ENCODE measurements at regions of chr6 and their contacts with region 1.

Region 1: DNA sequence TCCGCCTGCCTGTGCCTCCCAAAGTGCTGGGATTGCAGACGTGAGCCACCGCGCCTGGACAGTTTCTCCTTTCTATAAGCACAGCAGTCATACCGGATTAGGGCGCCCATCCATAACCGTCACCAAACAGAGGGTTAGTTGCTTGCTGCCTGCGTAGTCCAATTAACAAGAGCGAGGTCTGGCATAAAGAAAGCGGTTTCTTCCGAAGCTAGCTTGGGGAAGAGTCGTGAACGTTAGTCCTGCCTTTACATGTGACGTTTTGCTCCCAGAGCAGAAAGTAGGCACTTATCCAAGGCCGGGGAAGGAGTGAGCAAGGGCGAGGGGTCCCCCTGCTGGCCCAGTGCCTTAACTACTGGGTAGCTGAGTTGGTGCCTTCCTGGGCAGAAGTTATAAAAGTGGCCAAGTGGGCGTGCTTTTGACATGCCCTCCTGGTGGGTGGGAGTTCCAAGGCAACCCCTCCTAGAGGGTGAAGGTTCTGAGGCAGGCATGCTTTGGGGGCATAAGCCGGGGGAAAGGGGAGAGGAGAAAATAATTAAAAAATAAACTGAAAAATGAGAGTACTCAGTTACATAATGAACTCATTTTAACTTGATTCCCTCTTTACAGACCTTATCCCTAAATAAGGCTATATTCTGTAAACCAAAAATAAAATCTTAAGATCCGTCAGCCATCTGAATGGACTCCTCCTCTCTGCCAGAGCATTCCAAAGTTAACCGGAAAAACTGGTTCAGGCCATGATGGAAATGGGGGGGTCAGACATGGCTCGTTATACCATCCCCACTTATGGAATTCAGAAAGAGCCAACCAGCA is 88.0 kb downstream of the FAM217A start:
- DNase-seq: peak; percentile 67 to 77
- ATAC-seq: peak; percentile 83 to 89
- H3K4me3 ChIP-seq: peak overlapping the region; percentile 52 to 58 (median 55)
- H3K27ac ChIP-seq: peak overlapping the region; percentile 47 to 60 (median 54)
- H3K4me1 ChIP-seq: peaks cover 10 to 12% of the 10 kb centered on the region in 2 donors
- H3K27me3 ChIP-seq: no peaks in the 10 kb centered on the region
- CTCF ChIP-seq: peak; percentile 63 to 76 (median 70)
- POLR2A ChIP-seq: no peak

Region 2: DNA sequence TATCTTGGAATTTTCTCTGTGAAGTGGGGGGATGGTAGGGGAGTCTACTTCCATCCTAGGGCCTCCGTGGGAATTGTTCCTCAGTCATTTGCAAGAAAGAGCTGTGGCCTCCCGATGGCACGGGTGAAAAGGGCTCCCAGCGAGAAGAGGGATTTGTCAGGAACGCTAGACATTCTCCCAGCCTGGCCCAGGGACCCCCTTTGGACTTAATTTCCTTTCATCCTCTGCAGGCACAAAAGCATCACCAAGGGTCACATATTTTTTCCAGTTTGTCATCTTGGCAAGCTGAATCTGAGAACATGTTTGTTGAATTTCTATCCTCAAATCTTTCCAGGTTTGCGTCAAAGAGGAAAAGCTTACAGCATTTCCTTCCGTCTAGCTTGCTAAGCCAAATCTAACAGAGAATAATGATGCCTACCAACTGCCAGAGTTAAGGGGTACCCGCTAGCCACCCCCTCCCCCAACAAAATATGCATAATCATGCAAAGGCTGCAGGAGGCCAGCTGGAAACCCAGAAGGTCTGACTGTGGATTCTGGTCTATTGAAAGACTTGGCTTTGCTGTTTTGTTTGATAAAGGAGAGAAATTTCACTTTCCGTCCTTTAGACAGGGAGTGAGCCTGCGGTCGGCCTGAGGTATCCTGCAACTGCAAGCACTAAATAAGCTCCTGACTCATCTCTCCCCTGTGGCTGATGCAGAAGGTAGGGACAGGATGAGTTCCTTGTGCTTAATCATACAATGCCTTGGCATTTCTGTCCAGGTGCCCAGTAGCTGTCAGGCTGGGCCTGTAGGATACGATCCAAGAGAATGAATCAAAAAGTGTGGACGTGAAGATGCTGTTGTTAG is 709.0 kb before region 1 on chr6:
- in situ Hi-C with region 1: loop called in 1 of 4 experiments (anchors 10 kb)
- intact Hi-C with region 1: no loop called
- DNase-seq: peak; percentile 56 to 78
- ATAC-seq: peak; percentile 86 to 87
- H3K4me3 ChIP-seq: no peak overlapping the region
- H3K27ac ChIP-seq: peak overlapping the region; percentile 28 to 75 (median 67)
- H3K4me1 ChIP-seq: peaks cover 20 to 28% of the 10 kb centered on the region in 2 donors
- H3K27me3 ChIP-seq: no peaks in the 10 kb centered on the region
- CTCF ChIP-seq: no peak
- POLR2A ChIP-seq: no peak

Region 3: DNA sequence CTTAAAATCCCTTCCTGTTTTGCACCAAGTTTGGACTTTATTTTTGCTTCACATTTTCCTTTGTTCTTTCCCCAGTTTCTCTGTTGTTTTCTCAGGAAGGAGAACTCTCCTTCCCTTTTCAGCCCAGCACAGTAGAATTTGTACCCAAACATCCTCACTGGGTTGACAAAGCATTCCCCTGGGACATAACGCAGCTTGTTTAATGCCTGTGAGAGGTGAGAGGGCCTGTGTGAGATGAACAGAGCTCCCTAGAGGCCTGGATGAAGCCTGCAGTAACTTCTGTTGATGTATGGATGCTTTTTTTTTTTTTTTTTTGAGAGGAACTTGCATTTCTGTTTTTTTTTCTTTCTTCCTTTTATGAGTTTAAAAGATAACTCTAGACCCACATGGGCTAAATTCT is 429.2 kb before region 1 on chr6:
- in situ Hi-C with region 1: no loop called
- intact Hi-C with region 1: no loop called
- DNase-seq: no peak
- ATAC-seq: no peak
- H3K4me3 ChIP-seq: no peak overlapping the region
- H3K27ac ChIP-seq: no peak overlapping the region
- H3K4me1 ChIP-seq: no peaks in the 10 kb centered on the region
- H3K27me3 ChIP-seq: no peaks in the 10 kb centered on the region
- CTCF ChIP-seq: no peak
- POLR2A ChIP-seq: no peak

Region 4: DNA sequence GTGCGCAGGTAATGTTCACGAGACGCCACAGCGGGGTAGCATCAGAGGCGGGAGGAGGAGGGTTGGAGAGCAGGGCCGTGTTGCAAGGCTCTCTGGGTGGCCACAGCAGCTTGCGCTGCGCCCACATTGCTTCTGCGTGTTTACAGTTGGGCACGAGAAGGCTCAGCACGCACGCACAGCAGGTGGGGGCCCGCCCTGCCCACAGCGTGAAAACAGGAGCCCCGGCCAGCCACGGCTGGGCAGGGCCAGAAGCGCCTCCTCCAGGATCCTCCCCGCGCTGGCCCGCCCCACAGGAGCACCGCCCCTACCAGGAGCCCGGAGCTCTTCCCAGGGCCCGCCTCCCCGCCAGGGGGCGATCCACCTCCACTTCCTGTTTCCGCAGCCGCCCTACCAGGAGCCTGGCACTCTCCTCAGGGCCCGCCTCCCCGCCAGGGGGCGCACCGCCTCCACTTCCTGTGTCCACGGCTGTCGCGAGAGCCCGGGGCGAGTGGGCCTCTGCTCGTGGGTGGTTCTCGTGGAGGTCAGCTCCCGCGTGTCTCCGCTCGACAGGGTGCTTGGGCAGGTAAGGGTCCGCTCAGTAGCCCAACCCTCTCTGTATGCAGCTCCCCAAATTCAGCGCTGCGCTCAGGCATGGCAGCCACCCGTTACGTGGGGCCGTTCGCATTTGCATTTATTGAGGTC is 141.8 kb before region 1 on chr6 and contains the start of gene FAM50B:
- in situ Hi-C with region 1: no loop called
- intact Hi-C with region 1: loop called (anchors 5 kb)
- DNase-seq: peak; percentile 85 to 92
- ATAC-seq: peak; percentile 87 to 91
- H3K4me3 ChIP-seq: peak within 1 kb of the TSS; percentile 58 to 68 (median 60)
- H3K27ac ChIP-seq: peak within 1 kb of the TSS; percentile 80 to 95 (median 89)
- H3K4me1 ChIP-seq: peaks cover 4 to 8% of the 10 kb centered on the region in 2 donors
- H3K27me3 ChIP-seq: no peaks in the 10 kb centered on the region
- CTCF ChIP-seq: peak; percentile 94 to 99 (median 97)
- POLR2A ChIP-seq: peak; percentile 10 to 61
- total RNA-seq, gene FAM50B: 4.4 to 19.6 (median 15.3) TPM

Region 5: GRCh38 chr6:3939964-3940363 is 50.9 kb before region 1 on chr6:
- in situ Hi-C with region 1: no loop called
- intact Hi-C with region 1: loop called (anchors 5 kb)
- DNase-seq: no peak
- ATAC-seq: no peak
- H3K4me3 ChIP-seq: no peak overlapping the region
- H3K27ac ChIP-seq: no peak overlapping the region
- H3K4me1 ChIP-seq: no peaks in the 10 kb centered on the region
- H3K27me3 ChIP-seq: peaks cover 0 to 7% (median 6%) of the 10 kb centered on the region in 3 donors
- CTCF ChIP-seq: no peak
- POLR2A ChIP-seq: no peak

Region 6: DNA sequence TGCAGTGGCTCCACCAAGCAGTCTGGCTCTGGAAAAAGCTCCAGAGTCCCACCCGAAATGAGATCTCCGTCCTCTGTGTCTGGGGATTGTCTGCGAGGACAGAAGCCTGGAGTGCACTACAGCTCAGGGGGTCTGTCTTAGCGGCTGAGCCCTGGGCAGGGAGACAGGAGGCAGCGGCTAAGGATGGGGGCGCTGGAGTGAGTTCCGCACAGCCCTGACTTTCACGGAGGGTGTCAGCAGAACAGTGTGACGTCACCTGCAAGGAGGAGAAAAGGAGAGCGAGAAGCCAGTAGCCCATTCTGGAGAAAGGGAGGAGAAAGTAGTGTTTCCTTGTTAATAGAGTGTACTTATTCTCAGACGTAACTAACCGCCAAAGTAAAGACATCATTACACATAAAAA is 44.1 kb before region 1 on chr6:
- in situ Hi-C with region 1: no loop called
- intact Hi-C with region 1: loop called (anchors 5 kb)
- DNase-seq: no peak
- ATAC-seq: no peak
- H3K4me3 ChIP-seq: no peak overlapping the region
- H3K27ac ChIP-seq: no peak overlapping the region
- H3K4me1 ChIP-seq: no peaks in the 10 kb centered on the region
- H3K27me3 ChIP-seq: peaks cover 4 to 14% (median 12%) of the 10 kb centered on the region in 3 donors
- CTCF ChIP-seq: no peak
- POLR2A ChIP-seq: no peak

Measured in gastrocnemius medialis (tissue), 4 donors.